CD14-positive monocyte (primary cell): ENCODE measurements at regions of chr3 and their contacts with region 1.

Region 1: GRCh38 chr3:23805633-23806533 is at the start of gene UBE2E1:
- DNase-seq: peak; percentile 78 to 86 (median 85)
- H3K4me3 ChIP-seq: peak within 1 kb of the TSS; percentile 59 to 88 (median 60)
- H3K4me3 Mint-ChIP-seq: peak within 1 kb of the TSS; percentile 99 to 100
- H3K27ac ChIP-seq: peak within 1 kb of the TSS; percentile 46 to 81
- H3K27ac Mint-ChIP-seq: peak within 1 kb of the TSS; percentile 84 to 98 (median 93)
- H3K4me1 ChIP-seq: peaks cover 25 to 43% of the 10 kb centered on the region in 2 donors
- H3K4me1 Mint-ChIP-seq: peaks cover 40% of the 10 kb centered on the region
- H3K27me3 ChIP-seq: no peaks in the 10 kb centered on the region
- H3K27me3 Mint-ChIP-seq: peaks cover 5% of the 10 kb centered on the region in 3 donors
- CTCF ChIP-seq: no peak
- polyA plus RNA-seq, gene UBE2E1: 31.3 to 60.2 (median 34.6) TPM

Region 2: DNA sequence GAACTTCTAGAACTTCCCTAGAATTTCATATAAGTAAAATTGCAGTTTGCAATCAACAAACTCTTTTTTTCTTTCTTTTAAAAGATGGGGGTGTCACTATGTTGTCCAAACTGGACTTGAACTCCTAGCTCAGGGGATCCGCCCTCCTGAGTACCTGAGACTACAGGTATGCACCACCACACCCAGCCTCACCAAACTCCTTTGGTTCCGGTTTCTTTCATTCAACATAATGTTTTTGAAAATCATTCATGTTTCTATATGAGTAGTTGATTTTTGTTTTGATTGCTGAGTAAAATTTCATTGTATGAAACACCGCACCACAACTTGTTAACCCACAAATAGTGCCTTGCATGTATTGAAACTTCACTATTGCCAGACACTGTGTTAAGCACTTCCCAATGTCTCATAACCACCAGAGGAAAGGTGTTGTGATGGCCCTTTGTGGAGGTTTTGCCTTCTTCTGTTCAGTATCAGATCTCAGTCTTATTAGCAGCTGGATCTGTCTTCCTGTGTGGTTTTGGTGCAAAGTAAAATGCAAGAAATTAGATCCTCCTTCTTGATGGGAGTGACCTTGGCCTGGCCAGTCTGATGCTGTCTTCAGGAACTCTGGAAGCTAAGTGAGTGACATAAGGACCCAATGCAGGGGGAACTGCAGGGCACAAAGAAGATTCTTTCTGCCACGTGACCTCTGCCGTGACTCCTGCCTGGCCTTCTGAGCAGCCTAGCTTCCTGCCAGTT is 78.9 kb before region 1 on chr3:
- intact Hi-C with region 1: no loop called
- DNase-seq: peak in 2 of 3 donors; percentile 27 to 64
- H3K4me3 ChIP-seq: no peak overlapping the region
- H3K4me3 Mint-ChIP-seq: peak overlapping the region in 1 of 2 donors; percentile 9
- H3K27ac ChIP-seq: peak overlapping the region in 1 of 2 donors; percentile 9
- H3K27ac Mint-ChIP-seq: peak overlapping the region in 3 of 7 donors; percentile 25 to 75 (median 71)
- H3K4me1 ChIP-seq: peaks cover 17 to 32% of the 10 kb centered on the region in 2 donors
- H3K4me1 Mint-ChIP-seq: peaks cover 17% of the 10 kb centered on the region
- H3K27me3 ChIP-seq: no peaks in the 10 kb centered on the region
- H3K27me3 Mint-ChIP-seq: peaks cover 2 to 4% (median 2%) of the 10 kb centered on the region in 3 donors
- CTCF ChIP-seq: no peak

Region 3: GRCh38 chr3:23740517-23740965 is 65.3 kb before region 1 on chr3:
- intact Hi-C with region 1: loop called (anchors 5 to 10 kb)
- DNase-seq: peak; percentile 30 to 84 (median 51)
- H3K4me3 ChIP-seq: no peak overlapping the region
- H3K4me3 Mint-ChIP-seq: no peak overlapping the region
- H3K27ac ChIP-seq: no peak overlapping the region
- H3K27ac Mint-ChIP-seq: peak overlapping the region in 6 of 7 donors; percentile 63 to 91 (median 82)
- H3K4me1 ChIP-seq: peaks cover 21 to 27% of the 10 kb centered on the region in 2 donors
- H3K4me1 Mint-ChIP-seq: peaks cover 23% of the 10 kb centered on the region
- H3K27me3 ChIP-seq: no peaks in the 10 kb centered on the region
- H3K27me3 Mint-ChIP-seq: peaks cover 0 to 8% (median 4%) of the 10 kb centered on the region in 3 donors
- CTCF ChIP-seq: no peak